HepG2 (cell line): ENCODE measurements at regions of chr11 and their contacts with region 1.

Region 1: GRCh38 chr11:129815596-129816461 is at the start of gene TMEM45B:
- DNase-seq: no peak
- ATAC-seq: peak; percentile 90
- H3K4me3 ChIP-seq: peak within 1 kb of the TSS; percentile 71 to 84 (median 83)
- H3K27ac ChIP-seq: peak within 1 kb of the TSS; percentile 51
- H3K4me1 ChIP-seq: peaks cover 72% of the 10 kb centered on the region
- H3K27me3 ChIP-seq: no peaks in the 10 kb centered on the region
- CTCF ChIP-seq: no peak
- EP300 ChIP-seq: no peak
- POLR2A ChIP-seq: peak in 1 of 2 experiments; percentile 80; a peak in 2 of 4 replicates
- RAD21 ChIP-seq: no peak
- total RNA-seq, gene TMEM45B: 17.3 and 29.1 TPM in 2 replicates

Region 2: DNA sequence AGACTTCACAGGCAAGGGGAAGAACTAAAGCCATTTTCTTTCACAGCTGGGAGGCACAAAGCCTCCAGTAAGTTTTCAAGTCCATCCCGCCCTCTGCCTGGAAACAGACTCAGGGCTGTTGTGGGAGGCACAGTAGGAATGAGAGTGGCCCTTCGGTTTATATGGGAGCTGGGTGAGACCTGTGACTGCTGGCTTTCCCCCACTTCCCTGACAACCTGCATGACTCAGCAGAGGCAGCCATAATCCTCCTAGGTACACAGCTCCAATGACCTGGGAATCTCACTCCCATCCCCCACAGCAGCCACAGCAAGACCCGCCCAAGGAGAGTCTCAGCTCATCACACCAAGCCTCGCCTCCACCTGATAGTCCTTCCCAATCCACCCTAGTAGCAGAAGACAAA is 12.3 kb before region 1 on chr11:
- CTCF ChIA-PET with region 1: no interaction called
- POLR2A ChIA-PET with region 1: interaction called, 19 read pairs
- in situ Hi-C with region 1: no loop called
- intact Hi-C with region 1: no loop called
- DNase-seq: no peak
- ATAC-seq: peak; percentile 34; the same call in 1 of the 3 replicates
- H3K4me3 ChIP-seq: no peak overlapping the region
- H3K27ac ChIP-seq: no peak overlapping the region
- H3K4me1 ChIP-seq: peaks cover 52% of the 10 kb centered on the region
- H3K27me3 ChIP-seq: no peaks in the 10 kb centered on the region
- CTCF ChIP-seq: no peak
- EP300 ChIP-seq: no peak
- POLR2A ChIP-seq: no peak
- RAD21 ChIP-seq: no peak

Region 3: GRCh38 chr11:129828301-129828836 is 12.5 kb after region 1 on chr11:
- CTCF ChIA-PET with region 1: no interaction called
- POLR2A ChIA-PET with region 1: interaction called, 29 read pairs
- in situ Hi-C with region 1: no loop called
- intact Hi-C with region 1: no loop called
- DNase-seq: peak; percentile 93
- ATAC-seq: peak; percentile 91
- H3K4me3 ChIP-seq: no peak overlapping the region
- H3K27ac ChIP-seq: peak overlapping the region; percentile 87
- H3K4me1 ChIP-seq: peaks cover 69% of the 10 kb centered on the region
- H3K27me3 ChIP-seq: no peaks in the 10 kb centered on the region
- CTCF ChIP-seq: peak; percentile 30; the same call in 1 of the 2 replicates
- EP300 ChIP-seq: peak in 1 of 2 experiments; percentile 78; a peak in 2 of 4 replicates
- POLR2A ChIP-seq: peak in 1 of 2 experiments; percentile 35; a peak in 1 of 4 replicates
- RAD21 ChIP-seq: no peak

Region 4: GRCh38 chr11:129853518-129854236 is 37.8 kb after region 1 on chr11:
- CTCF ChIA-PET with region 1: no interaction called
- POLR2A ChIA-PET with region 1: interaction called, 13 read pairs
- in situ Hi-C with region 1: no loop called
- intact Hi-C with region 1: no loop called
- DNase-seq: peak; percentile 85
- ATAC-seq: peak; percentile 88
- H3K4me3 ChIP-seq: no peak overlapping the region
- H3K27ac ChIP-seq: peak overlapping the region; percentile 65
- H3K4me1 ChIP-seq: peaks cover 41% of the 10 kb centered on the region
- H3K27me3 ChIP-seq: no peaks in the 10 kb centered on the region
- CTCF ChIP-seq: 0 out of 2 replicates have a peak, but pooled peaks have one; percentile 4
- EP300 ChIP-seq: peak in 1 of 2 experiments; percentile 86; a peak in 2 of 4 replicates
- POLR2A ChIP-seq: 0 out of 4 replicates have a peak, but pooled peaks of 1 of the 2 experiments have one; percentile 36
- RAD21 ChIP-seq: no peak

Region 5: DNA sequence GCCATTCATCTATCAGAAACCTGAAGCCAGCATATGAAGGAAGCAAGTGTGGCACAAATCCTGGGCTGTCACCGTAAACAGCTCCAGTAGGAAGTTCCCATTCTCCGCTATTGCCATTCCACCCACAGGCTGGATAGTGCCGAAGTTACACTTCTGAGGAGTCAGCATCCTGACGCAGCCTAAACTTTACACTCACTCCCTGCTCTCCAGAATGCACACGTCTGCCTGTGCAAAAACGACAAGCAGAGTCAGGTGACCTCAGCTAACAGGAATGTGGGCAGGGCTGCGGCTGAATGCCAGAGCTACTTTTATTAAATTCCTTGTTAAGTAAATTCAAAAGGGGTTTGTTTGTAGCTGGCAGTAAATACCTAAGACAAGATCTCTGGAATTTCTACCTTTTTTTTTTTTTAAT is 45.9 kb after region 1 on chr11:
- CTCF ChIA-PET with region 1: no interaction called
- POLR2A ChIA-PET with region 1: interaction called, 8 read pairs
- in situ Hi-C with region 1: no loop called
- intact Hi-C with region 1: loop called (anchors 5 kb)
- DNase-seq: peak; percentile 93
- ATAC-seq: peak; percentile 90
- H3K4me3 ChIP-seq: no peak overlapping the region
- H3K27ac ChIP-seq: peak overlapping the region; percentile 63
- H3K4me1 ChIP-seq: peaks cover 36% of the 10 kb centered on the region
- H3K27me3 ChIP-seq: no peaks in the 10 kb centered on the region
- CTCF ChIP-seq: no peak; the same call in 1 of the 2 replicates
- EP300 ChIP-seq: no peak
- POLR2A ChIP-seq: no peak
- RAD21 ChIP-seq: no peak